ENCODE measurements at regions of chr1 and their contacts with region 1.

Region 1: GRCh38 chr1:198174297-198174696 is 17.5 kb downstream of the NEK7 start:
- DNase-seq: no peak
- H3K4me3 Mint-ChIP-seq: peak overlapping the region; percentile 38
- H3K27ac Mint-ChIP-seq: peak overlapping the region; percentile 81
- H3K4me1 Mint-ChIP-seq: peaks cover 79% of the 10 kb centered on the region
- H3K27me3 Mint-ChIP-seq: no peaks in the 10 kb centered on the region

Region 2: GRCh38 chr1:198201956-198202784 is 27.9 kb after region 1 on chr1:
- intact Hi-C with region 1: loop called (anchors 1 kb)
- DNase-seq: no peak
- H3K4me3 Mint-ChIP-seq: peak overlapping the region; percentile 61
- H3K27ac Mint-ChIP-seq: peak overlapping the region; percentile 82
- H3K4me1 Mint-ChIP-seq: peaks cover 71% of the 10 kb centered on the region
- H3K27me3 Mint-ChIP-seq: no peaks in the 10 kb centered on the region

Measured in activated T-helper 2 cell treated with anti-CD3 and anti-CD28 coated beads, Interferon-gamma antibody, Interleukin-2, Interleukin-4, amounts not matched to agents 10 μg/mL and 5 μg/mL and 100 μg/mL, durations not matched to agents 14 hours and 24 hours and 36 hours (primary cell).